Activated CD8-positive, alpha-beta T cell treated with anti-CD3 and anti-CD28 coated beads, Interleukin-2, amount 10 ng/mL, durations not matched to agents 7 days and 5 days (primary cell): ENCODE measurements at regions of chr15 and their contacts with region 1.

Region 1: DNA sequence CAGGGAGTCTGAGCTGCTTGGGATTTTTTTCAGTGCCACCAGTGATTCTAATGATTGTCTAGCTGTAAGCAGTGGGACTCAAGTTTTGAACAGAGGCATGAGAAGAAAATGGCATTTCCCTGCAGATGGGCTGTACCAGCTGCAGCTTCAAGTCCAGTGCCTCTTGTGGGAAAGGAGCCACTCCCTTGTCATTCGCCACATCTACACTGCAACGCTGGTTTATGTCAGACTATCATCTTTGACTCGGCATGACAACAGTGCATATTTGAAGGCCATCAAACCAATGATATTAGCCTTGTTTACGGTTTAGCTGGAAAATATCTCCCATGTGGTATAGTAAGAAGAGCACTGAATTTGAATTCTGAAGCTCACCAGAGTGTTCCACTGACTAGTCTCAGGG is 22.2 kb downstream of the SCG5 start:
- DNase-seq: no peak
- ATAC-seq: no peak
- H3K4me3 Mint-ChIP-seq: no peak overlapping the region
- H3K27ac Mint-ChIP-seq: no peak overlapping the region
- H3K4me1 Mint-ChIP-seq: peaks cover 4% of the 10 kb centered on the region
- H3K27me3 Mint-ChIP-seq: no peaks in the 10 kb centered on the region

Region 2: GRCh38 chr15:32651229-32651837 is 12.3 kb before region 1 on chr15:
- CTCF ChIA-PET with region 1: interaction called, 32 read pairs
- POLR2A ChIA-PET with region 1: no interaction called
- DNase-seq: peak; percentile 67
- ATAC-seq: peak; percentile 82
- H3K4me3 Mint-ChIP-seq: no peak overlapping the region
- H3K27ac Mint-ChIP-seq: no peak overlapping the region
- H3K4me1 Mint-ChIP-seq: peaks cover 6% of the 10 kb centered on the region
- H3K27me3 Mint-ChIP-seq: no peaks in the 10 kb centered on the region

Region 3: DNA sequence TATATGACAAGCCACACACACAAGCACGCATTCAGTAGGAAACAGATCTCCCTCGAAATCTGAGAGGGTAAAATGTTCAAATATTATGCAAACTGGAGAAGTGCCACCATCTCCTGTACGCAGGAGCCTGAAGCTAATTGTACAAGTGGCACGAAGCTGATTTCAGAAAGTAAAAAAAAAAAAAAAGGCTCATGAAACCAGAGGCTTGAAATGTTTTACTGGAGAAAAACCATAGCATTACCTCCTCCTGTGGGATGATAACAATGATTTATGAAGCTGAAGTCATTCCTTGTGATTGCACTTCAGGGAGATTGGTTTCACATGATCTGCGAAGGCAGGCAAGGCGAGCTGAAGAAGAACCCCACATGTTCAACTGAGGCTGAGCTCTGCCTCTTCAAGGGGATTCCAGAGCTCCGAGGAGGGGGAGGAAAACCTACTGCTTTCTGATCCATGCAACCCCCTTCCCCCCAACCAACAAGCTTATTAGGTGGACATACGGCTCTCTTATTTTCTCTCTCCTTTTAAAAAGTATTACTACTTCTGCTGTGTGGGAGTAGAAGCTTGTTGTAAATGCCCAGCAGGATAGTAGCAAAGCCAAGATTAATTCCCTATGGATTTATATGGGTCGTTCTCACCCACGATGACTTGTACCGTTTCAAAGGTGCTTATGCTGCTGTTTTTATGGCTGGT is 155.2 kb after region 1 on chr15:
- CTCF ChIA-PET with region 1: no interaction called
- POLR2A ChIA-PET with region 1: no interaction called
- DNase-seq: no peak
- ATAC-seq: no peak
- H3K4me3 Mint-ChIP-seq: no peak overlapping the region
- H3K27ac Mint-ChIP-seq: no peak overlapping the region
- H3K4me1 Mint-ChIP-seq: no peaks in the 10 kb centered on the region
- H3K27me3 Mint-ChIP-seq: peaks cover 12% of the 10 kb centered on the region

Region 4: GRCh38 chr15:32994810-32995424 is 331.2 kb after region 1 on chr15:
- CTCF ChIA-PET with region 1: interaction called, 11 read pairs
- POLR2A ChIA-PET with region 1: no interaction called
- DNase-seq: no peak
- ATAC-seq: no peak
- H3K4me3 Mint-ChIP-seq: no peak overlapping the region
- H3K27ac Mint-ChIP-seq: no peak overlapping the region
- H3K4me1 Mint-ChIP-seq: no peaks in the 10 kb centered on the region
- H3K27me3 Mint-ChIP-seq: peaks cover 6% of the 10 kb centered on the region

Region 5: GRCh38 chr15:33126559-33127290 is 463.1 kb after region 1 on chr15:
- CTCF ChIA-PET with region 1: no interaction called
- POLR2A ChIA-PET with region 1: no interaction called
- DNase-seq: peak; percentile 43
- ATAC-seq: no peak
- H3K4me3 Mint-ChIP-seq: no peak overlapping the region
- H3K27ac Mint-ChIP-seq: no peak overlapping the region
- H3K4me1 Mint-ChIP-seq: peaks cover 16% of the 10 kb centered on the region
- H3K27me3 Mint-ChIP-seq: peaks cover 2% of the 10 kb centered on the region